PC-3 (cell line): ENCODE measurements at regions of chrX and their contacts with region 1.

Region 1: DNA sequence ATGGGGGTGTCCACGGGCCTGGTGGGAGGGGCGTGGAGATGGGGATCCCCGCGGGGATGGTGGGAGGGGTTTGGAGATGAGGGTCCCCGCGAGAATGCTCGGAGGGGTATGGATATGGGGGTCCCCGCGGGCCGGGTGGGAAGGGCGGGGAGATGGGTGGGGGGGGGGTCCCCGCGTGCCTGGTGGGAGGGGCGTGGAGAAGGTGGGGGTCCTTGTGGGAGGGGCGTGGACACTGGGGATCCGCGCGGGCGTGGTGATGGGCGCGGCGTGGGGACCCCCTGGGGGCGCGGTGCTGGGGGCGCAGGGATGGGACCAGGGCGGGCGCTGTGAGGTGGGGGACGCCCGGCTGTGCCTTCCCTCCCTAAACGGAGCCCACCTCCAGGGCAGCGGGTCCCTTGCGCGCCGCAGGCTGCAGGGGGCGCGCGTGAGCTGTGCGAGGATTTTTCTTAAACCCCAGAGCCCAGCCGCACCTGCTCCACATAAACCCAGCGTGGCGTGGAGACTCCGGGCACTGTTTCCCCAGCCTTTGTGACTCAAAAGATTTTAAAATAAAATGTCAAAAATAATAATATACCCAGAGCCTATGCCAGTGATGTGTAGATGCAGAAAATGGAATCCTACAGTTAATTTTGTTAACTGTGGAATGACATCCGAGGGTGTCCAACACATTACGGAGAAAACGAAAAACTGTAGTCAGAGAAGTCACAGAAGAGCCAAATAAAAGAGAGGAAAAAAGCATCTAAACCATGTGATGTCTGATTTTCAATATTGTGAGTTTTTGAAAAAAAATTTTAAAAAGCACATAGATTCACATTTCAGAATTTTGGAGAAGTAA is 1.5 kb upstream of the ASMTL start:
- DNase-seq: peak; percentile 82
- ATAC-seq: peak; percentile 41
- H3K4me3 ChIP-seq: no peak overlapping the region
- H3K27ac ChIP-seq: no peak overlapping the region
- H3K4me1 ChIP-seq: no peaks in the 10 kb centered on the region
- H3K27me3 ChIP-seq: no peaks in the 10 kb centered on the region
- CTCF ChIP-seq: peak; percentile 74

Region 2: DNA sequence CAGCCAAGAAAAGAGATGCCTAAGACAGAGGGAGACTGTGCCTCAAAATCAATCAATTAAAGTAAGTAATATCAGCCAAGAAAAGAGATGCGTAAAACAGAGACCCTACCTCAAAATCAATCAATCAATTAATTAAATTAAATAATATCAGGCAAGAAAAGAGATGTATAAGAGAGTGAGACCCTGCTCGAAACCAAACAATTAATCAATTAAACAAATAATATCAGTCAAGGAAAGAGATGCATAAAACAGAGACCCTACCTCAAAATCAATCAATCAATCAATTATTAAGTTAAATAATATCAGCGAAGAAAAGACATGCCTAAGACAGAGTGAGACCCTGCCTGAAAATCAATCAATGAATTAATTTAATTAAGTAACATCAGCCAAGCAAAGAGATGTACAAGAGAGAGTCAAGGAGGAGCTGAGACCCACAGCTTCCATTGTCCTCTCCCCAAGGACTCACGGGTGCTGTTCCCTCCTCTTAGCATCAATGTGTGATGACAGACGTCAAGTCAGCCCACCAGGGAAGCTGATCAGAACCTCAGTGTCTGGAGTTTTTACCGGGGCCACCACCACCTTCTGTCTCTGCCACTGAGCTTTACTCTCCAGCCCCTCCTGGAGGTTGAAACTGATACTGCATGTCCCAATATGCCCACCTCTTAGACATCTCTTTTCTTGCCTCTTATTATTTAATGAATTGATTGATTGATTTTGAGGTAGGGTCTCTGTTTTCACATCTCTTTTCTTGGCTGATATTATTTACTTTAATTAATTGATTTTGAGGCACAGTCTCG is 126.8 kb after region 1 on chrX:
- CTCF ChIA-PET with region 1: no interaction called
- POLR2A ChIA-PET with region 1: no interaction called
- intact Hi-C with region 1: loop called (anchors 2 kb)
- DNase-seq: peak; percentile 71
- ATAC-seq: peak; percentile 58
- H3K4me3 ChIP-seq: no peak overlapping the region
- H3K27ac ChIP-seq: no peak overlapping the region
- H3K4me1 ChIP-seq: peaks cover 5% of the 10 kb centered on the region; the same call in 1 of the 2 replicates
- H3K27me3 ChIP-seq: no peaks in the 10 kb centered on the region
- CTCF ChIP-seq: peak; percentile 61

Region 3: DNA sequence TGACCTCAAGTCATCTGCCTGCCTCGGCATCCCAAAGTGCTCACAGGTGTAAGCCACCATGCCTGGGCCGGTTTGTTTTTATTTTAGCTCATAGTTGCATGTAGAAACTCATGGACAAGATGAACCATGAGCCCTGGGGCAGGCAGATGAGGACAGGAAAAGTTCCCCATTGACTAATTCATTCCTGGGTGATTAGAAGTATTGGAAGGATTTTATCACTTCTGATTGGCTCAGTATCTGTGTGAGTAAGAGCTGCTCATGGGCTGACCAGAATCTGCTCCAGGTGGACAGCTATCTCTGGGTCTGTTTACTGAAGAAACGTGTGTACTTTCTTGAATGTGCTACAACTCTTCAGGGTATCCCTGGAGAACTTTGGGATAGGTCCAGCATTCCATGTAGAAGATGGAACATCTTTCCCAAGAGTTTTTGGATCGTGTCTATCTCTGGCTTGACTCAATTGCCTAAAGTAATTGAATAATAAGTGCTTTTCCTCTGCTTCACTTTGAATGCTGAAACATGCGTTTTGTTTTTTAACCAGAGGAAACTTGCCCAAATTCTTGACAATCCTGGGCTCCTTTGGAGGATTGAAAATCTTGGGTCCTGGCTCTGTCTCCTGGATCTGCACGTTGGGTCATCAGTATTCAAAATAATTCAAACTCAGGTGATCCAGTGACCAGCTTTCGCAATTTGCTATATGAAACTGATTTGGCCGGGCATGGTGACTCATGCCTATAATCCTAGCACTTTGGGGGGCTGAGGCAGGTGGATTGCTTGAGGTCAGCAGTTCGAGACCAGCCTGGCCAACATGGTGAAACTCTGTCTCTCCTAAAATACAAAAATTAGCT is 1135.2 kb after region 1 on chrX:
- CTCF ChIA-PET with region 1: no interaction called
- POLR2A ChIA-PET with region 1: no interaction called
- intact Hi-C with region 1: loop called (anchors 5 kb)
- DNase-seq: peak; percentile 36
- ATAC-seq: no peak
- H3K4me3 ChIP-seq: no peak overlapping the region
- H3K27ac ChIP-seq: no peak overlapping the region
- H3K4me1 ChIP-seq: peaks cover 7% of the 10 kb centered on the region; the same call in 1 of the 2 replicates
- H3K27me3 ChIP-seq: peaks cover 15% of the 10 kb centered on the region
- CTCF ChIP-seq: no peak